K562 (cell line): ENCODE measurements at regions of chr1 and their contacts with region 1.

Region 1: GRCh38 chr1:182391362-182392044 is at the start of gene GLUL:
- DNase-seq: peak; percentile 97 to 99 (median 98)
- ATAC-seq: peak; percentile 89
- H3K4me3 ChIP-seq: peak within 1 kb of the TSS; percentile 77
- H3K27ac ChIP-seq: peak within 1 kb of the TSS; percentile 92
- H3K4me1 ChIP-seq: peaks cover 24 to 52% of the 10 kb centered on the region in 2 experiments
- H3K27me3 ChIP-seq: no peaks in the 10 kb centered on the region
- CTCF ChIP-seq: peak in 1 of 3 experiments; percentile 60; a peak in 3 of 6 replicates
- EP300 ChIP-seq: no peak
- POLR2A ChIP-seq: peak; percentile 100
- RAD21 ChIP-seq: peak; percentile 26 to 37; a peak in 3 of 4 replicates
- polyA plus RNA-seq, gene GLUL: 3,526 to 4,222 TPM

Region 2: DNA sequence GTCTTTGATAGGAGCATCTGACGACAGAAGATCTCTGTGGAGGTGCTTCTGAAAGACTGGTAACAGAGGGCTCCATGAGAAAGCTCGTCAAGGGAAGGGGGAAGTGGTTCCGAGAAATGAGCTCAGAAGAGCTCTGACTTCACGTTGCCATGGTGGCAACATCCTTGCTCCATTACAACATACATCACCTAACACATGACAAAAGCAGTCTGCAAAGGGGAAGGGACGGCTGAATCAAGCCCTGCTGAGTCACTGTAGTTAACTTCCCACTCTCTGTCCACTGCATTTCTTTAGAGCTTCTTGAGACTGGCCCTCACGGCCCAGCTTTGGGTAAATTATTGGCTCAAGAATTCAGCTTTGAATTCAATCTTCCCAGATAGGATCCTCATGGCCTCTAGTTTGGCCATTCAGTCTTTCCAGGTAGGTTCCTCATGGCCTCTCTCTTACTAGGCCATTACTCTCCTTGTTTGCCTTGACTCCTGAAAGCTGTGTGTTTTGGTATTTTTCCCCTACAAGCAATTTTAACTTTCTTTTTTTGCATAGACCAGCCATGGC is 242.0 kb before region 1 on chr1:
- CTCF ChIA-PET with region 1: interaction called, 53 read pairs
- POLR2A ChIA-PET with region 1: interaction called, 137 read pairs
- in situ Hi-C with region 1: loop called (anchors 5 kb)
- intact Hi-C with region 1: no loop called
- DNase-seq: peak; percentile 55 to 86 (median 70)
- ATAC-seq: peak; percentile 98
- H3K4me3 ChIP-seq: no peak overlapping the region
- H3K27ac ChIP-seq: peak overlapping the region; percentile 61
- H3K4me1 ChIP-seq: peaks cover 2 to 19% of the 10 kb centered on the region in 2 experiments
- H3K27me3 ChIP-seq: no peaks in the 10 kb centered on the region
- CTCF ChIP-seq: no peak
- EP300 ChIP-seq: peak; percentile 73
- POLR2A ChIP-seq: no peak
- RAD21 ChIP-seq: peak; percentile 7 to 10; a peak in 1 of 4 replicates

Region 3: GRCh38 chr1:182291584-182292192 is 99.8 kb before region 1 on chr1:
- CTCF ChIA-PET with region 1: no interaction called
- POLR2A ChIA-PET with region 1: interaction called, 19 read pairs
- in situ Hi-C with region 1: no loop called
- intact Hi-C with region 1: no loop called
- DNase-seq: no peak
- ATAC-seq: no peak
- H3K4me3 ChIP-seq: no peak overlapping the region
- H3K27ac ChIP-seq: peak overlapping the region; percentile 33; the same call in 1 of the 3 replicates
- H3K4me1 ChIP-seq: peaks cover 13 to 49% of the 10 kb centered on the region in 2 experiments
- H3K27me3 ChIP-seq: no peaks in the 10 kb centered on the region
- CTCF ChIP-seq: no peak
- EP300 ChIP-seq: no peak
- POLR2A ChIP-seq: no peak
- RAD21 ChIP-seq: no peak

Region 4: GRCh38 chr1:182357913-182358312 is 33.6 kb before region 1 on chr1:
- CTCF ChIA-PET with region 1: no interaction called
- POLR2A ChIA-PET with region 1: interaction called, 9 read pairs
- in situ Hi-C with region 1: no loop called
- intact Hi-C with region 1: loop called (anchors 2 kb)
- DNase-seq: no peak
- ATAC-seq: no peak
- H3K4me3 ChIP-seq: no peak overlapping the region
- H3K27ac ChIP-seq: no peak overlapping the region
- H3K4me1 ChIP-seq: peaks cover 13 to 33% of the 10 kb centered on the region in 2 experiments
- H3K27me3 ChIP-seq: no peaks in the 10 kb centered on the region
- CTCF ChIP-seq: no peak
- EP300 ChIP-seq: no peak
- POLR2A ChIP-seq: no peak
- RAD21 ChIP-seq: no peak

Region 5: DNA sequence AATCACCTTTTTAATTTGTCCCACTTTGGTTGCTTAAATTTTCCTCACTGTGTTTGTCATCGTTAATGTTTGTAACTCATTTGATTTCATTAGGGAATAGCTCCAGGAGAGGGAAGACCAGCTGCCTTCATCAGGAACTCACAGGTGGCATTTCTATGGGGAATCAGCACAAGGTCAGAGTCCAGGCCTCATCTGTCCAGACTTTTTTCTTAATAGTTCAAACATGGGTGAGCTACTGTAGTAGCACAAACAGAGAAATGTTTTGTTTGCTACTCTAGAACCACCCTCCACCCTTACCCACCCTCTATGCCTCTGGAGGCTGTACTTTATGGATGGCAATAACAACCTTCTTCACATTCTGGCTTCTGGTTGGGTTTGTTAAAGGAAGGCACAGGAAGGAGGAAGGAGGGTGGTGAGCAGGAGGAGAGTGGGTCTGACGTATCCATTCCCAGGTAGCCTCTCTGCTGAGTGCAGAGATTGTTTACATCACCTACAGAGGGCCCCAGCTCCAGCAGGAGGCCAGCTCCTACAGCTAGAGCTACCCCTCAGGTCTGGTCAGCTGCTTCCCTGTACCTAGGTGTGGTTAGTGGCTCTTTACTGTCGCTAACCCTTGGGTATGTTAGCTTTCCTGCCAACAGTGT is 17.1 kb after region 1 on chr1:
- CTCF ChIA-PET with region 1: no interaction called
- POLR2A ChIA-PET with region 1: interaction called, 11 read pairs
- in situ Hi-C with region 1: no loop called
- intact Hi-C with region 1: no loop called
- DNase-seq: no peak
- ATAC-seq: peak; percentile 56
- H3K4me3 ChIP-seq: no peak overlapping the region
- H3K27ac ChIP-seq: no peak overlapping the region
- H3K4me1 ChIP-seq: no peaks in the 10 kb centered on the region
- H3K27me3 ChIP-seq: peaks cover 1 to 4% of the 10 kb centered on the region in 2 experiments; a peak in 3 of 5 replicates
- CTCF ChIP-seq: no peak
- EP300 ChIP-seq: no peak
- POLR2A ChIP-seq: no peak
- RAD21 ChIP-seq: no peak

Region 6: GRCh38 chr1:182910143-182910542 is 518.6 kb after region 1 on chr1:
- CTCF ChIA-PET with region 1: no interaction called
- POLR2A ChIA-PET with region 1: no interaction called
- in situ Hi-C with region 1: no loop called
- intact Hi-C with region 1: no loop called
- DNase-seq: no peak
- ATAC-seq: no peak
- H3K4me3 ChIP-seq: no peak overlapping the region
- H3K27ac ChIP-seq: no peak overlapping the region
- H3K4me1 ChIP-seq: no peaks in the 10 kb centered on the region
- H3K27me3 ChIP-seq: peaks cover 0 to 2% of the 10 kb centered on the region in 2 experiments; a peak in 1 of 5 replicates
- CTCF ChIP-seq: no peak
- EP300 ChIP-seq: no peak
- POLR2A ChIP-seq: no peak
- RAD21 ChIP-seq: peak in 1 of 2 experiments; percentile 23; a peak in 1 of 4 replicates